Posterior cingulate gyrus (tissue), 11 donors: ENCODE measurements at regions of chr7 and their contacts with region 1.

Region 1: DNA sequence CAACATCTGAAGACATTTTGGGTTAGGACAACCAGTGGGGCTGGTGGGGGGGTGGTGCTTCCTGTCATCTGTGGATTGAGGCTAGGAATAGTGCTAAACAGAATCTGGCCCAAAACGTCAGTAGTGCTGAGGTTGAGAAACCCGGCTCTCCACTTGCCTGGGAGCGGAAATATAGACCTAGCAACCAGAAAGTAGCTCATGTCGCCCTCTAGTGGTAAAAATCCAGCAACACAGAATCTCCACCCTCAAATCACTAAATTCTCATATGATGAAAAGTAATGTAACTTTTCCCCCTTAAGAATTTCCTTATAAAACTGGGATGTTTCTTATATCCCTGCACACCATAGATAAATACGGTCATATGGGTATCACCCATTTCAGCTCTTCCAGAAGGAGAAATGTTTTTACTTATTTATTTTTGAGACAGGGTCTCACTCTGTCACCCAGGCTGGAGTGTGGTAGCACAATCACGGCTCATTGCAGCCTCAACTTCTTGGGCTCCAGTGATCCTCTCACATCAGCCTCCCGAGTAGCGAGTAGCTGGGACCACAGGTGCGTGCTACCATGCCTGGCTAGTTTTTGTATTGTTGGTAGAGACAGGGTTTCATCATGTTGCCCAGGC is 34.4 kb downstream of the ZC3HAV1 start:
- DNase-seq: peak in 7 of 10 donors; percentile 36 to 88 (median 48)

Region 2: DNA sequence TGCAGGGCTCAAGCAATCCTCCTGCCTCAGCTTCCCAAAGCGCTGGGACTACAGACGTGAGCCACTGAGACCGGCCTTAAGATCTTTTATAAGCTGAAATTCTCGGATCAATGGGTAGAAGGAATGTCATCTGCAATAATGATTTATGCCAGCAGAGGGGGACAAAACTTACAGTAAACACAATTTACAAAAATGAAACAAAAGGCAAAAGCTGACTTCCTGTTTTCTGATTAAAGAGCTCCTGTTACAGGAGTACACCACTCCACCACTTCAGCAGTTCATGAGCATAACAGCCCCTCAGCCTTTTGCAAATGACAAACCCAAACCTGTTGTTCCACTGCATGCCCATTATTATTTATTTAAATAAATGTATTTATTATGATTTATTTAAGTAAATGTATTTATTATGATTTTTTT is 188.6 kb before region 1 on chr7:
- intact Hi-C with region 1: loop called (anchors 10 kb)
- DNase-seq: no peak

Region 3: GRCh38 chr7:139016931-139017511 is 58.1 kb before region 1 on chr7:
- intact Hi-C with region 1: loop called (anchors 1 kb)
- DNase-seq: peak; percentile 31 to 92 (median 66)